Panc1 (cell line): ENCODE measurements at regions of chr15 and their contacts with region 1.

Region 1: DNA sequence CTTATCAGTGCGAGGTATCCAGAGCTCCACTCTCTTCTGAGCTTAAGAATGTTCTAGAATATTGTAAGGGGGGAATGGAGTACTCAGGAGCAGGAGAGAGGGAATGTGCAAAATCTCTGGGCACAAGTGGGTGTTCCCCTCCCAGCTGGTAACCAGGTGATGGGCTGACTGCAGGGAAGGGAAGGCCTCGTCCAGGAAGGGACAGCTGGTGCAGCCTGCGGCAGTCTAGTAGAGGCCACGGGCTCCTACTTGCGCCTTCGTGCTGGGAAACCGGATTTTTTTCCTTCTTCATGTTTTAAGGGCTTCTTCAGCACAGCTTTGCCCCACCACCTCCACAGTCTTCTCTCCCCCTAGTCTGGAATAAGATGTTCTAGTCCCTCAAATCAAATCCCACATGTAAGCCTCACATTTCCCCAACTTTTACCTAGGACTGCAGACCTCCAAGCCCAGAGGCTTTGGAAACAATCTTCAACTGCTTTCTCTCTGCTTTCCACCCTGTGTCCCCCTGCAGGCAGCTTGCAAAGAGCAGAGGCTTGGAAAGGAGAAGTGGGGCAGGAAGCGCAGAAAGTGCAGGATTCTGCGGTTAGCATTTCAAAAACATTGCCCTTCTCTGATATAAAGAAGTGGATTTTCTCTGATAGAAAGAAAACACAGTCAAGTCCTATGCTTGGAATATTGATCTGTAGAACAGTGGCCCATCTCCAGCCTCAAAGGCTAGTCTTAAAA is 11.9 kb upstream of the CGNL1 start:
- DNase-seq: no peak
- ATAC-seq: no peak
- H3K4me3 ChIP-seq: no peak overlapping the region
- H3K27ac ChIP-seq: no peak overlapping the region
- H3K4me1 ChIP-seq: no peaks in the 10 kb centered on the region
- H3K27me3 ChIP-seq: no peaks in the 10 kb centered on the region
- CTCF ChIP-seq: no peak; the same call in 1 of the 2 replicates

Region 2: GRCh38 chr15:57079931-57080620 is 284.4 kb before region 1 on chr15:
- CTCF ChIA-PET with region 1: no interaction called
- POLR2A ChIA-PET with region 1: no interaction called
- in situ Hi-C with region 1: no loop called
- intact Hi-C with region 1: no loop called
- DNase-seq: no peak
- ATAC-seq: no peak
- H3K4me3 ChIP-seq: no peak overlapping the region
- H3K27ac ChIP-seq: no peak overlapping the region
- H3K4me1 ChIP-seq: peaks cover 8% of the 10 kb centered on the region; the same call in 1 of the 2 replicates
- H3K27me3 ChIP-seq: no peaks in the 10 kb centered on the region
- CTCF ChIP-seq: 0 out of 2 replicates have a peak, but pooled peaks have one; percentile 16

Region 3: DNA sequence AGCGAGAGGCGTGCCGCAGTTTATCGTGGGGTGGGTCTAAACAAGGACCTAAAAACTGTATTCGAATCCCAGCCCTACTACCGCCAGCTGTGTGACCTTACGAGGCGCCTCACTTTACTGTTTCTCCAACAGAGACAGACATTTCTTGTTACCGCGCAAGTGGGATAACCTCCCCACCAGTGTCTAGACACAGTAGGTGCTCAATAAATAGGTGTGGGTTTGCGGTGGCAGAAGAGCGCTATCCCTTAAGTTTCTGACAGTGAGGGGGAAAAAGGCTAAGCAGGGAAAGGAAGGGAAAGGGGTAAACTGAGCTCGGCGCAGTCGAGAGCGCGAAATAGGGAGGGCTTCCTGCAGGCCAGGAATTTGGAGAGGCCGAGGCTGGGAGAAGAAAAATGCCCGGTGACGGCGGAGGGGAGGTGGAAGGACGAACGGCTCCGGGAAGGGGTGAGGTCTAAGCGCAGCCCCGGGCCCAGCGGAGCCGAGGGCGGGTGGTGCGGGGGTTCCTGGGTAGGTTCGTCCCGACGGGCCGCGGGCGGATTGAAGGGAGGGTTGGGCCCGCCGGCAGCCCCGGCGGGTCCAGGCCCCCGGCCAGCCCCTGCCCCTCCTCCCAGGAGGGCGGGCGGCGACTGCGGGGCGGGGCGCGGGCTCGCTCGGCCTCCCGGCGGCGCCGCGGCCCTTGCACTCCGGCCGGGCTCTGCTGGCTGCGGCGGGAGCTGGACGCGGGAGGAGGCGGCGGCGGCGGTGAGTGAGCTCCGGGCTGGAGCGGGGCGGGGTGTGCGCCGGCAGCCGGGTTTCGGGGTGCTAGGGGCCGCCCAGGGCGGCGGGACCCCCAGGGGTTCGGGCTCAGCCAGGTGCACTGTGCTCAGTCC is 11.6 kb after region 1 on chr15 and contains the start of gene CGNL1:
- CTCF ChIA-PET with region 1: interaction called, 12 read pairs
- POLR2A ChIA-PET with region 1: no interaction called
- in situ Hi-C with region 1: no loop called
- intact Hi-C with region 1: no loop called
- DNase-seq: no peak
- ATAC-seq: peak; percentile 84
- H3K4me3 ChIP-seq: peak within 1 kb of the TSS; percentile 46 to 53
- H3K27ac ChIP-seq: no peak within 1 kb of the TSS
- H3K4me1 ChIP-seq: peaks cover 6% of the 10 kb centered on the region; the same call in 1 of the 2 replicates
- H3K27me3 ChIP-seq: peaks cover 18% of the 10 kb centered on the region
- CTCF ChIP-seq: no peak
- total RNA-seq, gene CGNL1: 3.5 TPM

Region 4: DNA sequence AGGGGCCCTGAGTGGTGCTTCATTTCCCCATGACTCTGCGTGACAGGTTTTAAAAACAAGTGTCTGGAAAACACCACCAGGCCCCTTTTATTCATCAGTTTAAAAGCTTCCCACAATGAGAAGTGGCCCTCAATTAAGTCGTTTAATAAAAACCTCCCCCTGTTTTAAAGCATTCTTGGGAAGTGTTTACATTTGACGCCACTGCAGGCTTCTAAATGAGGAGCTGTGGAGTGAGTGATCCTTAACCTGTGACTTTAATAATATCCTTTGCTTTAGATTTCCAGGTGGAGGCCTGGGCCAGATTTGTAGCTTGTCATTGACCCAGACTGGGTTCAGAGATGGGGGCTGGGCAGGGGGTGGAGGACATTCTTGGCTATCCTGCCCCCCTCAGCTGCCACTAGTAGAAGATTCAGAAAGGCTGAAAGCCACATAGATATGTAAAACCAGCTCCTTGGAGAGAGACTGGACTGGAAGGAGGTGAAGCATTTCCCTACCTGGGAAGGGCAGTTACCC is 23.2 kb after region 1 on chr15:
- CTCF ChIA-PET with region 1: no interaction called
- POLR2A ChIA-PET with region 1: no interaction called
- in situ Hi-C with region 1: no loop called
- intact Hi-C with region 1: no loop called
- DNase-seq: no peak
- ATAC-seq: no peak
- H3K4me3 ChIP-seq: no peak overlapping the region
- H3K27ac ChIP-seq: no peak overlapping the region
- H3K4me1 ChIP-seq: no peaks in the 10 kb centered on the region
- H3K27me3 ChIP-seq: no peaks in the 10 kb centered on the region
- CTCF ChIP-seq: no peak